RWPE1 (cell line): ENCODE measurements at regions of chr5 and their contacts with region 1.

Region 1: DNA sequence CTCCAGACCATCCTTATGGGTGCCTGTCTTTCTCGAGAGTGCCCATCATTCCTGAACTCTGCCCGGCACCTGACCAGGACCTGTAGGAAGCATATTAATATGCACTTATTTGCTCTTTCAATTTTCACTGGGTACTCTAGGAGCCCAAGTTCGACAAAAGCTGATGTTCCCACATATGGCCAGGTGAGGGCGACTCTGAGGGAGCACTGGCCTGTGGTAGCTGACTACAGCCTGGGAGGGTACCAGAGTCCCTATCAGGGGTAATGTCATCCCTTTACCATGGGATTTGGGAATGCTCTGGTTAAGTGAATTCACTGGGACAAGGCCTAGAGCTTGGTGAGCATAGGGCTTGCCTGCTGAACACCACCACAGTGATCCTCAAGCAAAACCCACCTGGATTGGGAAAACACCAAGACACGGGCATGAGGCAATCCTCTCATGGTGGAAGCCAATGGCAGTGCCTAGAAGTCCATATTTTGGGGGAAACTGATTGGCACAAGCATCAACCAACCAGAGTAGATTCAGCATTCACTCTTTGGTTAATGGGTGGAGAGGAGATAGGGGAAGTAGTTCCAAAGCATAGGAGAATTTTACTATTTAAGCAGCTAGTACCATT is 112.2 kb downstream of the MTX3 start:
- DNase-seq: peak; percentile 33
- H3K27ac ChIP-seq: no peak overlapping the region
- CTCF ChIP-seq: no peak

Region 2: GRCh38 chr5:79535477-79536192 is 343.2 kb before region 1 on chr5:
- CTCF ChIA-PET with region 1: interaction called, 14 read pairs
- POLR2A ChIA-PET with region 1: no interaction called
- DNase-seq: no peak
- H3K27ac ChIP-seq: no peak overlapping the region
- CTCF ChIP-seq: no peak

Region 3: GRCh38 chr5:79865579-79865978 is 13.2 kb before region 1 on chr5:
- CTCF ChIA-PET with region 1: no interaction called
- POLR2A ChIA-PET with region 1: no interaction called
- DNase-seq: no peak
- H3K27ac ChIP-seq: no peak overlapping the region
- CTCF ChIP-seq: no peak

Region 4: DNA sequence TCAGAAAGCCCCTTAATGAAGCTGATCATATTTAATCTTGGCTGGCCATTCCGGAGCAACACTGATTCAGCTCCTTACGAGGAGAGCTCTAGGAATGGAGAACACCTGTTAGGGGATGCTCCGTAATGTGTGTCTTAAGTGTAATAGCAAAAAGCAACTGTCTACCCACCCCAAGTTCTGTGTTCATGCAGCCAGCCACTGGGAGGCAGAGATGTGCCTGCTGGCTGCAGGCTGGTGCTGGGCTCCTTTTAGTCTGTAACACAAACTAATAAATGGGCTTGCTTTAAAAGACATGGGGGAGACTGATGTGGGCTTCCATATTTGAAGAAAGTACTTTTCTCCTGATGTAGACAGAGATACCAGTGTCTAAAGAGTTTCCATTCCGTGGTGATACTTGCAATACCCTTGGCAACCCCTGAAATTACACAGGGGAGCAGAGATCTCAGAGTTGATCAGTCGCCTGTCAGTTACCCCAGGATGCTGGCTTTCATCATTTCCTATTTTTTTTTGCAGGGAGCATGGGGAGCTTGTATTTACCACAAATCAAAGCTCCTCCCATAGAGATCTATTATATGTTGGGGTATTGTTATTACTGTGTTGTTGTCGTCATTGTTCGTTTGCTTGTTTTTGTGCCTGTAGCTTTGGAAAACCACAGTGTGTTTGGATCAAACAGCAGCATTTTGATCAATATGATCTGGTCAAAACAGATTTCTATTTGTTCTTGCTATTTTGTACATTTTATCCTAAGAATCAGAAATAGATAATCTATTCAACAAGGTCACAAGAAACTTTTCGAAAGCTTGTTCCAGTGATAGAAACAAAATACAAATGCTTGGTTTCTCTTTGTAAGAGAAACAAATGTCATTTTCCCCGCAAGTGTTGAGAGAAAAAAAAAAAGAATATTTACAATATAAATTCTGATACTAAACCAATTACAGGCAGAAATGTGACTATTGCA is 46.4 kb after region 1 on chr5:
- CTCF ChIA-PET with region 1: no interaction called
- POLR2A ChIA-PET with region 1: no interaction called
- DNase-seq: no peak
- H3K27ac ChIP-seq: no peak overlapping the region
- CTCF ChIP-seq: no peak